B cell (primary cell): ENCODE measurements at regions of chr2 and their contacts with region 1.

Region 1: DNA sequence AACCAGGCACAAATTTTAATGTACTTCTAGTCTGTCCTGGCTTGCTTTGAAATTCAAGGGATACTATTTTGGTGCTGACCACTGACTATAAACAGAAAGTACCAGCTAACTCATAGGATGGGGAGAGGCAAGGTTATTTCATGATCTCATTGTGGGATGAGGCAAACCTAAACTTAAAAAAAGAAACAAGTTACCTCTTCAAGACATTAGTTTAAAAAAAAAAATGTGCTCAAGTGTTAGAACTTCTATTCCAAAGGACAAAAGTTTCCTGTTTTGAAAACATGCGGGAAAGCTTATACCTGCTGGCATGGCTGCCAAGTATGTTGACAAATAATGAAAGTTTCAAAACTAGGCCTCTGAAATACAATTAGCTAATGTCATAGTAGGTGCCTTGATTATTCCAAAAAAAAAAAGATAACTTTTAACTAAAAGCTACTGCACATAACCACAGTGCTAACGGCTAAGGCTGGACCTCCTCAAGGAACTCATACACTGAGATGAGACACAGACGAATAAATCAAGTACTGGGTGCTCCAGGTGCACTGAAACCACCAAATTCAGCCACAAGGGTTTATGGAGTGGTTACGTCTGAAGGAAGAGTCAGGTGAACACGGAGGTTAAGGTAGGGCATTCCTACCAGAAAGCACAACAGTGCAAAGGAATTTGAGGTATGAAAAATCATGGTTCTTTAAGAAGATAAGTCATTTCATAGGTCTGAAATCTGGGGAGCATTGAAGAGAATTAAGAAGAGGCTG is 38.1 kb downstream of the TMEM131 start:
- DNase-seq: peak; percentile 52
- ATAC-seq: peak; percentile 24
- H3K4me3 ChIP-seq: no peak overlapping the region
- H3K4me3 Mint-ChIP-seq: peak overlapping the region; percentile 60
- H3K27ac ChIP-seq: peak overlapping the region in 1 of 2 donors; percentile 66
- H3K27ac Mint-ChIP-seq: peak overlapping the region; percentile 85
- H3K4me1 ChIP-seq: peaks cover 28 to 57% of the 10 kb centered on the region in 2 donors
- H3K4me1 Mint-ChIP-seq: peaks cover 82% of the 10 kb centered on the region
- H3K27me3 ChIP-seq: no peaks in the 10 kb centered on the region
- H3K27me3 Mint-ChIP-seq: no peaks in the 10 kb centered on the region
- CTCF ChIP-seq: no peak

Region 2: GRCh38 chr2:97911206-97911921 is 46.2 kb before region 1 on chr2:
- CTCF ChIA-PET with region 1: no interaction called
- POLR2A ChIA-PET with region 1: no interaction called
- intact Hi-C with region 1: loop called (anchors 5 kb)
- DNase-seq: peak; percentile 71
- ATAC-seq: peak; percentile 73
- H3K4me3 ChIP-seq: no peak overlapping the region
- H3K4me3 Mint-ChIP-seq: peak overlapping the region; percentile 17
- H3K27ac ChIP-seq: peak overlapping the region in 1 of 2 donors; percentile 37
- H3K27ac Mint-ChIP-seq: peak overlapping the region; percentile 4
- H3K4me1 ChIP-seq: peaks cover 63 to 73% of the 10 kb centered on the region in 2 donors
- H3K4me1 Mint-ChIP-seq: peaks cover 89% of the 10 kb centered on the region
- H3K27me3 ChIP-seq: no peaks in the 10 kb centered on the region
- H3K27me3 Mint-ChIP-seq: no peaks in the 10 kb centered on the region
- CTCF ChIP-seq: no peak